ENCODE measurements at regions of chr11 and their contacts with region 1.

Region 1: GRCh38 chr11:65637794-65638317 is at the start of gene SIPA1:
- DNase-seq: peak; percentile 60
- H3K4me3 ChIP-seq: peak within 1 kb of the TSS; percentile 86
- H3K27me3 ChIP-seq: no peaks in the 10 kb centered on the region
- CTCF ChIP-seq: peak; percentile 72
- polyA plus RNA-seq, gene SIPA1: 13.4 and 21.6 TPM in 2 replicates

Region 2: DNA sequence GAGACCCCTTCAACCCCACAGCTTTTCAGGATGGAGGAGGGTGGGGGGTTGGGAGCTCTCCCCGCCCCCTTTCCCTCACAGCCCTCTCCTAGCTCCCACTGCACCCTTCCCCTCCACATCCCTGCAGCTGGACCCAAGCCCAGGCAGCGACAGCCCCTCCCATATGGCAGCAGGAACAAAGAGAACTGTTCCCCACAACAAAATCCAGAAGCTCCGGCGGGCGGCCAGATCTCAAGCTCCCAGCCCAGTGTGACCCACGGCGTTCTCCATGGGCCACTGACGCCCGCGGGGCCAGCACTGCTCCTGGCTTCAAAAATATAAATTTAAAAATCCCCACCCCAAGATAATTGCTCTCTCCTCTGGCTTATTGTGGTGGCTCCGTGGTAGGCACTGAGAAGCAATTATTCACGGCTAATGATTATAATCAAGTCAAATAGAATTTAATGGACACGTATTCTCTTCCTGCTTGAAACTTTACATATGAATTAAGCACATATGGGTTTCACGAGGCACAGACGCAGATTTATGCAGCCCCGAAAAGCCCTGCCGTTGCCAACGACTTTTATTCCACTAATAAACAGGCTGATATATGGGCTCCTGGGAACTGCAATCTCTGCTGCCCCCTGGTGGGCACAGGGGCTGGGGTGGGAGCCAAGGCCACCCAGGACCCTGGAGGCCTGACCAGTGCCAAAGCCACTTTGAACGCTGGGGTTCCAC is 1489.5 kb before region 1 on chr11:
- CTCF ChIA-PET with region 1: no interaction called
- POLR2A ChIA-PET with region 1: no interaction called
- DNase-seq: no peak
- H3K4me3 ChIP-seq: no peak overlapping the region
- H3K27me3 ChIP-seq: no peaks in the 10 kb centered on the region
- CTCF ChIP-seq: peak; percentile 94

Region 3: GRCh38 chr11:65599216-65599954 is 38.5 kb before region 1 on chr11:
- CTCF ChIA-PET with region 1: no interaction called
- POLR2A ChIA-PET with region 1: no interaction called
- DNase-seq: no peak
- H3K4me3 ChIP-seq: no peak overlapping the region
- H3K27me3 ChIP-seq: no peaks in the 10 kb centered on the region
- CTCF ChIP-seq: no peak

Region 4: DNA sequence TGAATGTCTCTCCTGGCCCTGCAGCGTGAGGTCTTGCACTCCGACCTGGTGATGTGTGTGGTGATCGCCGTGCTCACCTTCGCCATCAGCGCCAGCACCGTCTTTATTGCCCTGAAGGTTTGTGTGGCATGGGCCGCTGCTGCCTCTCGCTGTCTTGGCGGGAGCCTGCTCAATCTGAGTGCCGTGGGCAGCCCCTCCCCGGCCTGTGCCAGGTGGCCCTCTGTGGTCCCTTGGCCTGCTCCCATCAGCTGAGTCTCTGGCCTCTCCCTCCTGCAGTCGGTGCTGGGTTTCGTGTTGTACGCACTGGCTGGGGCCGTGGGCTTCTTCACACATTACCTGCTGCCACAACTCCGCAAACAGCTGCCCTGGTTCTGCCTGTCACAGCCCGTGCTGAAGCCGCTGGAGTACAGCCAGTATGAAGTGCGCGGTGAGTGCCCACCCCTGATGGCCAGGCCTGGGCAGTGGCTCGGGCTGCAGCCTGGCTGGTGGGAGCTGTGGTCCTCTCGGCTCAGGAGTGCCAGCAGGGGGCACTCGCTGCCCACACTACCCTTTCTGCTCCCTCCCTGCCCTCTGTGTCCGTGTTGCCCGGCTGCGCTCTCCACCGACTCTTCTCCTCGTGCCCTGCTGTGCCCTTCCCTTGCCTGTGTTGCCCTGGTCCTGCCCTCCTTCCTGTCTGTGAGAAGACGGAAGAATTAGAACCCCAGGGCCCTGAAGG is 12.1 kb before region 1 on chr11:
- CTCF ChIA-PET with region 1: interaction called, 10 read pairs
- POLR2A ChIA-PET with region 1: no interaction called
- DNase-seq: no peak
- H3K4me3 ChIP-seq: no peak overlapping the region
- H3K27me3 ChIP-seq: no peaks in the 10 kb centered on the region
- CTCF ChIP-seq: peak; percentile 58

Region 5: DNA sequence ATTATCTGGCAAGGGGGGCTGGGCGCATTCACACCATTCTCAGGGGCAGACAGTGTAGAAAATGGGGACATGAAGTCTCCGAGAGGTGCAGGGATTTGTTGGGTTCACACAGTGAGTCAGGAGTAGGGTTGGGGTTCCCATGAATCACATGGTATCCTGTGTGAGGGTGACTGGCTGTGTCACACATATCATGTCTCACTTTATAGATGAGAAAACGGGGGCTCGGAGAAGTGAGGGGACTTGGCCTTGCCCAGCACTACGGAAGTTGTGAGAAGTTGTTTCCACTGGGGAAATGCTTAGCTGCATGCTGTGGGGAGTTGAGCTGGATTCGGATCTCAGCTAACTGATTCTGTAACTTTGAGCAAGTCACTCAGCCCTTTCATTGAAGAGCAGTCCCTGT is 406.9 kb after region 1 on chr11:
- CTCF ChIA-PET with region 1: no interaction called
- POLR2A ChIA-PET with region 1: no interaction called
- DNase-seq: no peak
- H3K4me3 ChIP-seq: no peak overlapping the region
- H3K27me3 ChIP-seq: no peaks in the 10 kb centered on the region; the same call in 1 of the 2 replicates
- CTCF ChIP-seq: no peak